GM18951 (cell line): ENCODE measurements at regions of chr6 and their contacts with region 1.

Region 1: GRCh38 chr6:108247954-108248536 is 12.8 kb downstream of the SNX3 start:
- POLR2A ChIP-seq: no peak

Region 2: DNA sequence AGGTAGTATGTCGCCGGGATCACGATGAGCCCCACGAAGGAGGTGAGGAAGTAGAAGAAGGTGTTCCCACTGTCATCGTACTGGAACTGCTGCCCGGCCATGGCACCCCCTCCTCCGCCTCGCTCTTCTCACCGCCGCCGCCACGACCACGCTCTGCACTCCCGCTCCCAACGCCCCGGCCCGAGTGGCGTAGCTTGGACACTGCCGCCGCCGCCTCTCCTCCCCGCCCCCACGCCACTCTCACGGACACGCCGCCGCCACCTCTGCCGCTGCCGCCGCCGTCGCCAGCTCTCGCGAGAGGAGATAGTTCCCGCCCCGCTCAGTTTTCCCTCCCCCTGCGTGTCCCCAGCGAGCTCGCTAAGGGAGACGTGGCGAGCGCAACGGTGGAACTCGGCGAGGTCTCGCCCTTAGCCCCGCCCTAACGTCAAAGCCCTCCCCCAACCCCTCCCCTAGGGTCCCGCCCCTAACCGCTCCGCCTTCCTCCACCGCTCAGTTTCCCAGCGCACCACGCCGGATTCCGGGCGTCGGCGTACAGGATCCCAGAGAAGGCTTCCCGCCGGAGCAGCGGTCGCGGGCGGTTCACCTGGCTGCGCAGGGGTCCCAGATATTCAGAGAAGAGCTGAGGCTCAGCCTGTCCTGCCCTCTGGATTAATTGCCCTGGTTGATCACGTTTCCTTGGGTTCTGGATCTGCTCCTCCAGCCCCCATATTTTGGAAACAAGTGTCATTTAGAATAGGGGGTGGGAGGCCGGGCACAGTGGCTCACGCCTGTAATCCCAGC is 289.9 kb before region 1 on chr6 and contains the start of gene SEC63:
- in situ Hi-C with region 1: no loop called
- POLR2A ChIP-seq: peak; percentile 84

Region 3: GRCh38 chr6:108009894-108010293 is 238.2 kb before region 1 on chr6:
- in situ Hi-C with region 1: no loop called
- POLR2A ChIP-seq: no peak

Region 4: GRCh38 chr6:108492131-108492766 is 244.2 kb after region 1 on chr6:
- in situ Hi-C with region 1: loop called (anchors 10 kb)
- POLR2A ChIP-seq: no peak